ENCODE measurements at regions of chr11 and their contacts with region 1.

Region 1: DNA sequence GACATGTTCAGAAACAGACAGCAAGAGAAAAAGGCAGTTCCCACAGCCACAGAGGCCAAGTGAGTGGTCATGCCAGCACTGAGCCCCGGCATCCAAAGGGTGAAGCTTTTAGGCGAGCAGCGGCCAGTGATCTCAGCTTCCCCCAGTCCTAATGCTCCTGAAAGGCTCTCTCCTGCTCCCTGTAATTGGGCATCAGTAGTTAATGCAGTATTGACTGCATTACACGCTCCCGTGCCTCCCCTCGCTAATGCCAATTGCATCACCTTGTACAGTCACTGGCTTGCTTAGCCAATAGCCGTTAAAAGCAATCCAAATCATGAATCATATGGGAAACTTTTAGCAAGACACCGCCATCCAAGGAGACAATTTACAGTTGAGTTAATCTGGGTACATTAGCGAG is 4.9 kb downstream of the LMO1 start:
- DNase-seq: peak in 1 of 2 experiments; percentile 35
- H3K4me3 ChIP-seq: no peak overlapping the region
- H3K27ac ChIP-seq: no peak overlapping the region
- H3K4me1 ChIP-seq: peaks cover 0 to 8% (median 5%) of the 10 kb centered on the region in 4 experiments; a peak in 5 of 7 replicates
- H3K27me3 ChIP-seq: peaks cover 19 to 35% (median 30%) of the 10 kb centered on the region in 4 experiments
- CTCF ChIP-seq: no peak
- EP300 ChIP-seq: no peak
- POLR2A ChIP-seq: no peak
- RAD21 ChIP-seq: no peak

Region 2: GRCh38 chr11:8149726-8150125 is 109.1 kb before region 1 on chr11:
- CTCF ChIA-PET with region 1: no interaction called
- POLR2A ChIA-PET with region 1: no interaction called
- DNase-seq: no peak
- H3K4me3 ChIP-seq: no peak overlapping the region
- H3K27ac ChIP-seq: no peak overlapping the region
- H3K4me1 ChIP-seq: peaks cover 0 to 8% (median 2%) of the 10 kb centered on the region in 4 experiments; a peak in 2 of 7 replicates
- H3K27me3 ChIP-seq: no peaks in the 10 kb centered on the region
- CTCF ChIP-seq: no peak
- EP300 ChIP-seq: no peak
- POLR2A ChIP-seq: no peak
- RAD21 ChIP-seq: no peak

Region 3: GRCh38 chr11:8225589-8226036 is 33.2 kb before region 1 on chr11:
- CTCF ChIA-PET with region 1: interaction called, 171 read pairs
- POLR2A ChIA-PET with region 1: interaction called, 3 read pairs
- DNase-seq: peak; percentile 86 to 98
- H3K4me3 ChIP-seq: no peak overlapping the region
- H3K27ac ChIP-seq: no peak overlapping the region
- H3K4me1 ChIP-seq: peaks cover 0 to 14% (median 3%) of the 10 kb centered on the region in 4 experiments; a peak in 4 of 7 replicates
- H3K27me3 ChIP-seq: no peaks in the 10 kb centered on the region; a peak in 1 of 7 replicates
- CTCF ChIP-seq: peak; percentile 90 to 98 (median 97)
- EP300 ChIP-seq: no peak
- POLR2A ChIP-seq: no peak
- RAD21 ChIP-seq: peak; percentile 98 to 99

Measured in H1 (cell line).